Naive thymus-derived CD4-positive, alpha-beta T cell (primary cell): ENCODE measurements at regions of chr2 and their contacts with region 1.

Region 1: GRCh38 chr2:11154923-11155380 is 315 bp upstream of the SLC66A3 start:
- DNase-seq: peak; percentile 92 to 97 (median 96)
- ATAC-seq: peak; percentile 94
- H3K4me3 ChIP-seq: peak overlapping the region; percentile 76
- H3K4me3 Mint-ChIP-seq: peak overlapping the region; percentile 73 to 88 (median 84)
- H3K27ac ChIP-seq: peak overlapping the region; percentile 75
- H3K27ac Mint-ChIP-seq: peak overlapping the region; percentile 44 to 94 (median 90)
- H3K4me1 ChIP-seq: peaks cover 10 to 15% of the 10 kb centered on the region in 2 donors
- H3K4me1 Mint-ChIP-seq: peaks cover 10 to 22% (median 18%) of the 10 kb centered on the region in 7 donors
- H3K27me3 ChIP-seq: no peaks in the 10 kb centered on the region
- H3K27me3 Mint-ChIP-seq: peaks cover 0 to 10% (median 0%) of the 10 kb centered on the region in 5 donors

Region 2: DNA sequence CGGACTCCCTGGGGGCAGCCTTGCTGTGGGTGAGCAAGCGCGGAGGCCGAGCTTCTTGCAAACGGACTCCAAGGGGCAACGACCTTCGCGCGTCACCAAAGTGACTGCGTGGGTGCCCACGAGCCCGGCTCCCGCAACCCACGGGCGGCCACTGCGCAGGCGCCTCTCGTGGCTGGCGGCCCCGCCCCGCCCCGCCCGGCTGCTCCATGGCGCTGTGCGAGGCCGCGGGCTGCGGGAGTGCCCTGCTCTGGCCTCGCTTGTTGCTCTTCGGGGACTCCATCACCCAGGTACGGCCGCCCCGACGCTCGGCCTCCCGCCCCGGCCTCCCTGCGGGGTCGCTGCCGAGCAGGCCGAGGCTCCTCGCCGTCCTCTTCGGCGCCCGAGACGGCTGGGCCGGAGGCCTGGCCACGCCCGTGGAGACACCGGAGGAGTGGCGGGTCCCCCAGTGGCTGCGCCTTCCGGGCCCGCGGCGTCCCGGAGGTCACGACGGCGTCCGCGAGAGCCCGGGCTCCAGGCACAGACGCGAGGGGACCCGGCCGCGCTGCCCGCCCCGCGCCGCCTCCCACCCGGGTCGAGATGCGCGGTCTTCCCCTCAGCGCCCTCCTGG is 1680.5 kb before region 1 on chr2 and contains the start of gene IAH1:
- CTCF ChIA-PET with region 1: no interaction called
- POLR2A ChIA-PET with region 1: no interaction called
- intact Hi-C with region 1: loop called in 1 of 2 experiments (anchors 5 kb)
- DNase-seq: peak in 8 of 9 donors; percentile 66 to 81 (median 78)
- ATAC-seq: peak; percentile 89
- H3K4me3 ChIP-seq: peak within 1 kb of the TSS; percentile 82
- H3K4me3 Mint-ChIP-seq: peak within 1 kb of the TSS; percentile 81 to 89 (median 84)
- H3K27ac ChIP-seq: peak within 1 kb of the TSS; percentile 95
- H3K27ac Mint-ChIP-seq: peak within 1 kb of the TSS; percentile 83 to 95 (median 88)
- H3K4me1 ChIP-seq: peaks cover 11 to 21% of the 10 kb centered on the region in 2 donors
- H3K4me1 Mint-ChIP-seq: peaks cover 20 to 53% (median 45%) of the 10 kb centered on the region in 7 donors
- H3K27me3 ChIP-seq: no peaks in the 10 kb centered on the region
- H3K27me3 Mint-ChIP-seq: no peaks in the 10 kb centered on the region
- total RNA-seq, gene IAH1: 43.9 to 62.7 (median 49.7) TPM

Region 3: GRCh38 chr2:10688921-10689807 is 465.8 kb before region 1 on chr2:
- CTCF ChIA-PET with region 1: no interaction called
- POLR2A ChIA-PET with region 1: no interaction called
- intact Hi-C with region 1: loop called in 1 of 2 experiments (anchors 10 kb)
- DNase-seq: peak in 2 of 9 donors; percentile 6 to 8
- ATAC-seq: peak; percentile 15
- H3K4me3 ChIP-seq: peak overlapping the region; percentile 92
- H3K4me3 Mint-ChIP-seq: no peak overlapping the region
- H3K27ac ChIP-seq: peak overlapping the region; percentile 84
- H3K27ac Mint-ChIP-seq: no peak overlapping the region
- H3K4me1 ChIP-seq: peaks cover 13 to 16% of the 10 kb centered on the region in 2 donors
- H3K4me1 Mint-ChIP-seq: peaks cover 3 to 14% (median 6%) of the 10 kb centered on the region in 7 donors
- H3K27me3 ChIP-seq: no peaks in the 10 kb centered on the region
- H3K27me3 Mint-ChIP-seq: peaks cover 0 to 2% (median 0%) of the 10 kb centered on the region in 5 donors

Region 4: GRCh38 chr2:11187083-11187619 is 32.2 kb after region 1 on chr2:
- CTCF ChIA-PET with region 1: no interaction called
- POLR2A ChIA-PET with region 1: no interaction called
- intact Hi-C with region 1: loop called in 1 of 2 experiments (anchors 5 kb)
- DNase-seq: no peak
- ATAC-seq: no peak
- H3K4me3 ChIP-seq: no peak overlapping the region
- H3K4me3 Mint-ChIP-seq: no peak overlapping the region
- H3K27ac ChIP-seq: no peak overlapping the region
- H3K27ac Mint-ChIP-seq: peak overlapping the region in 1 of 9 donors; percentile 5
- H3K4me1 ChIP-seq: no peaks in the 10 kb centered on the region
- H3K4me1 Mint-ChIP-seq: no peaks in the 10 kb centered on the region
- H3K27me3 ChIP-seq: no peaks in the 10 kb centered on the region
- H3K27me3 Mint-ChIP-seq: no peaks in the 10 kb centered on the region

Region 5: GRCh38 chr2:11234309-11234708 is 79.4 kb after region 1 on chr2:
- CTCF ChIA-PET with region 1: no interaction called
- POLR2A ChIA-PET with region 1: no interaction called
- intact Hi-C with region 1: no loop called
- DNase-seq: peak in 1 of 9 donors; percentile 8
- ATAC-seq: no peak
- H3K4me3 ChIP-seq: no peak overlapping the region
- H3K4me3 Mint-ChIP-seq: no peak overlapping the region
- H3K27ac ChIP-seq: no peak overlapping the region
- H3K27ac Mint-ChIP-seq: no peak overlapping the region
- H3K4me1 ChIP-seq: no peaks in the 10 kb centered on the region
- H3K4me1 Mint-ChIP-seq: peaks cover 0 to 11% (median 5%) of the 10 kb centered on the region in 7 donors
- H3K27me3 ChIP-seq: no peaks in the 10 kb centered on the region
- H3K27me3 Mint-ChIP-seq: no peaks in the 10 kb centered on the region

Region 6: DNA sequence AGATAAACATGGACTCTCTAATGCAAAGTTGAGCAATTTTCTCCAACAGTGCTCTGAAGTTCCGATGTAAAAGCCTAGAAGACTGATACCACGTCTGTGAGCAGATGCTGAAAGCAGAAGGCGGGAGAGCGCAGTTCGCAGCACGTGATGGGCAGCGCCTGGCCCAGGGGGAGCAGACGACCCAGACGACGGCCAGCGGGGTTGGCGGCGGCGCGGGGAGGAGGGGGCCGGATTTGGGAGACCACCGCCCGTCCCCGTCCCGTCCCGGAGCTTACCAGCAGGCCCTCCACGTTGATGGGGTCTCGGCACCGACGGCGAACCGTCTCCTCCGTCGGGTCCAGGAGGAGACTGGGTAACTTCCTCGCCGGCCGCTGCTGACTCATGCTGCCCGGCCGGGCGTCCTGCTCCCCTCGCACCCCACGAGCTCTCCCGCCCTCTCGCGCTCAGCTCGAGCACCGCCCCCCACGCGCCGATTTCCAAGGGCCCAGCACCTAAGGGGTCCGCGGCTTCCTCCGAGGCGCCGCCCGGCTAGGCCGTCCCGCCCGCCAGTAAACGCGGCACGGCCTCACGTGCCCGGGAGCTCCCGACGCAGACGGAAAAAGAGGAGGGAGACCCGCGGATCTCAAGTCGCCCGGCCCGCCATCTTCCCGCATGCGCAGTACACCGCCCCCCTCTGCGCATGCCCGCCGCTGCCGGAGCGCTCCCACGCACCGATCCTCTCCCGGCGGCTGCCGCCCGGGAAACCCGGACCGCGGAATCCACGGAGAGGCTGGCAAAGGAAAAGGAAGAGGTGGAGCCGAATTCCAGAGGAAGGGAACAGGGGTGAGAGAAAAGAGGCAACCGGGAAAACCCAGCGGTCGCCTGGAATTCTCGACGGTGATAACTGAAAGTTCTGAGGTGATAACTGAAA is 310.8 kb after region 1 on chr2 and contains the start of gene E2F6:
- CTCF ChIA-PET with region 1: no interaction called
- POLR2A ChIA-PET with region 1: interaction called, 3 read pairs
- intact Hi-C with region 1: loop called (anchors 1 kb)
- DNase-seq: peak; percentile 80 to 94 (median 87)
- ATAC-seq: peak; percentile 83
- H3K4me3 ChIP-seq: peak within 1 kb of the TSS; percentile 69
- H3K4me3 Mint-ChIP-seq: peak within 1 kb of the TSS; percentile 91 to 99 (median 98)
- H3K27ac ChIP-seq: peak within 1 kb of the TSS; percentile 73
- H3K27ac Mint-ChIP-seq: peak within 1 kb of the TSS; percentile 87 to 97 (median 93)
- H3K4me1 ChIP-seq: peaks cover 5 to 8% of the 10 kb centered on the region in 2 donors
- H3K4me1 Mint-ChIP-seq: peaks cover 27 to 49% (median 39%) of the 10 kb centered on the region in 7 donors
- H3K27me3 ChIP-seq: no peaks in the 10 kb centered on the region
- H3K27me3 Mint-ChIP-seq: peaks cover 0 to 2% (median 0%) of the 10 kb centered on the region in 5 donors
- total RNA-seq, gene E2F6: 6.2 to 11.6 (median 9.2) TPM

Region 7: DNA sequence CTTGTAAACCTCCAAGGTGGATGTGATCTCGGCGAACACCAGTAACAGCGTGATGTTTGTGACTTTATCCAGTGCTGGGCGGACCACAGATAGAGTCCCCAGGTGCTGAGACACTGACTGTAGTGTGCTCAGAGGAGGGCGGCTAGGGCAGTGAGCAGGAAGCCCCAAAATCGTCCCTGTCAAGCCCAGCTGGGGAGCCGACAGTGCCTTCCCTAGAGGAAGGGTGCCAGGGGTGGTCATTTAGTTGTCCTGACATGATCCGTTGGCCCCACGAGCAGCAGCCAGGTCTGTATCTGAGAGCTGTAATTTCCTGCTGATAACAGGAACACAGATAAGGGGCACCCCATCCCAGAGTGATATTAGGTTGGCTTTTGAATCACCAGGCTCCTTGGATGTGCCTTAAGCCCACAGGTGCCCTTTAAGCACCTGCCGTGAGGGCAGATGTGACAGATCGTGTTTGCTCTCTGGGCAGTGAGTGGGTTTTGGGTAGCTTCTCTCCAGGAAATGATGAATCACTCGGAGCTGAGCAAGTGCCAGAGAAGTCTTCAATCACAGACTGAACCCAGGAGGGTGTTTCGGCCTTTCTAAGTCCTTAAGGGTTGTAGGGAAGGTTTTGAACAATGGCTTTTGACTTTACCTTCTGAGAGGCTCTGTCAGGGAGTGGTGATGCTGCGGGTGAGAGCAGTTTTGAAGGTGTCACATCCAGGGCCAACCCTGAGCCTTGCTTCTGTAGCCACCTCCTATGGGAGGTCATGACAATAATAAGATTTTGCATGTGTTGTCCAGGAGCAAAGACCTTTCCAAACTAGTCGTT is 599.1 kb after region 1 on chr2:
- CTCF ChIA-PET with region 1: no interaction called
- POLR2A ChIA-PET with region 1: no interaction called
- intact Hi-C with region 1: loop called (anchors 1 to 5 kb)
- DNase-seq: peak in 7 of 9 donors; percentile 27 to 69 (median 36)
- ATAC-seq: peak; percentile 62
- H3K4me3 ChIP-seq: peak overlapping the region; percentile 37
- H3K4me3 Mint-ChIP-seq: peak overlapping the region; percentile 79 to 93 (median 82)
- H3K27ac ChIP-seq: peak overlapping the region; percentile 66
- H3K27ac Mint-ChIP-seq: peak overlapping the region; percentile 84 to 97 (median 94)
- H3K4me1 ChIP-seq: peaks cover 56 to 64% of the 10 kb centered on the region in 2 donors
- H3K4me1 Mint-ChIP-seq: peaks cover 58 to 93% (median 84%) of the 10 kb centered on the region in 7 donors
- H3K27me3 ChIP-seq: no peaks in the 10 kb centered on the region
- H3K27me3 Mint-ChIP-seq: no peaks in the 10 kb centered on the region